AG04450 (cell line): ENCODE measurements at regions of chr18 and their contacts with region 1.

Region 1: GRCh38 chr18:57881818-57882413 is 78.8 kb upstream of the ATP8B1 start:
- DNase-seq: peak; percentile 72
- H3K4me3 ChIP-seq: no peak overlapping the region
- H3K27ac ChIP-seq: no peak overlapping the region
- H3K27me3 ChIP-seq: no peaks in the 10 kb centered on the region
- CTCF ChIP-seq: peak; percentile 98

Region 2: DNA sequence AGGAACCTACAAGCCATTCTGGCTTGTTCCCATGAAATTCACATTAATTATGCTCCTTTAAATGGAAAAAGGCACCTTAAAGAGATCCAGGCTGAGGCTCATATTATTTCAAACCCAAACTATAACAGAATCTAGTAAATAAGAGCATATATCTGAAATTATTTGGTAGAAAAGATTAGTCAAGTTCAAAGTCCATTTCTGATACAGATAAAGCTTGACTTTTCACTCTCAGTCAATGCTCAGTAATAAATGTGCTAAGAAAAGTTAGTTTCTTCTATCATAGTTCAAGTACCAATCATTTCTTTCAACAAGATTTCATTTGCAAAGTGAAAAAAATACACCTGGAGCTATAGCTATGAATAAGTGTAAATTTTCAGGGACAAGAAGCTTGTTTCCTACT is 198.4 kb before region 1 on chr18:
- CTCF ChIA-PET with region 1: no interaction called
- POLR2A ChIA-PET with region 1: no interaction called
- DNase-seq: no peak
- H3K4me3 ChIP-seq: no peak overlapping the region
- H3K27ac ChIP-seq: no peak overlapping the region
- H3K27me3 ChIP-seq: no peaks in the 10 kb centered on the region
- CTCF ChIP-seq: no peak

Region 3: GRCh38 chr18:57869228-57869627 is 12.7 kb before region 1 on chr18:
- CTCF ChIA-PET with region 1: interaction called, 17 read pairs
- POLR2A ChIA-PET with region 1: no interaction called
- DNase-seq: no peak
- H3K4me3 ChIP-seq: no peak overlapping the region
- H3K27ac ChIP-seq: no peak overlapping the region
- H3K27me3 ChIP-seq: no peaks in the 10 kb centered on the region
- CTCF ChIP-seq: no peak

Region 4: DNA sequence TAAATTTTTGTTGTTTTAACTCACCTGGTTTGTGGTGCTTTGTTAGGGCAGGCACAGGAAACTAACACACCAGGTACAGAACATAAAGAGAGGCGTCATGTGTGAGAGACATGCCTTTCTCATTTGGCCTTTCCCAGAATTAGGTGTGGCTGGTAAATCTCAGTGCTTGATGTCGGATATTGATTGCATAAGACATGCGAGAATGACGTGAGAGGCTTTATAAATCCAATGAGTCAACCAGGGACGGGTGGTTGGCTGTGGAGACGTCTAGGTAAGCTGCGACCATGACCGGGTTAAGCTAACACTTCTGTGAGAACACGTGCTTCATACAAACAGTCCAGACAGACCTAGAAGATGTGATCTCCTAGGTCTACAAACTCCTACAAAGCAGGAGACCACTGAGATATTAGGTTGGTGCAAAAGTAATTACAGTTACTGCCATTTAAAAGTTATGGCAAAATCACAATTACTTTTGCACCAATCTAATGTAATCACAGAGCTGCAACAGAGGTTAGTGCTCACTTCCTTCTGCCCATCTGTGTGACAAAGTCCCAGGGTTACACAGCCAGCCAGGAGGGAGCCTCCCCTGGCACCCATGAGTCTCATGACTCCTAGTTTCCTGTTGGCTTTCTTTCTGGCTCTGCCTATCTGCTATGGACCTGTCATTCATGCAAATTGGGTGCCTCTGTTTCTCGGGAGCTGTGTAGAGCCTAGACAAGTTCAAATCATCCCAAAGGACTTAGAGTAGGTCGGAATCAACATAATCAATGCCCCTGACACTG is 20.1 kb after region 1 on chr18:
- CTCF ChIA-PET with region 1: interaction called, 10 read pairs
- POLR2A ChIA-PET with region 1: no interaction called
- DNase-seq: no peak
- H3K4me3 ChIP-seq: no peak overlapping the region
- H3K27ac ChIP-seq: no peak overlapping the region
- H3K27me3 ChIP-seq: peaks cover 6% of the 10 kb centered on the region
- CTCF ChIP-seq: no peak

Region 5: GRCh38 chr18:57915865-57916582 is 34.1 kb after region 1 on chr18:
- CTCF ChIA-PET with region 1: interaction called, 14 read pairs
- POLR2A ChIA-PET with region 1: no interaction called
- DNase-seq: no peak
- H3K4me3 ChIP-seq: no peak overlapping the region
- H3K27ac ChIP-seq: no peak overlapping the region
- H3K27me3 ChIP-seq: no peaks in the 10 kb centered on the region
- CTCF ChIP-seq: no peak

Region 6: GRCh38 chr18:58043491-58044379 is 161.8 kb after region 1 on chr18 and contains the start of gene NEDD4L:
- CTCF ChIA-PET with region 1: interaction called, 16 read pairs
- POLR2A ChIA-PET with region 1: no interaction called
- DNase-seq: peak; percentile 65
- H3K4me3 ChIP-seq: peak within 1 kb of the TSS; percentile 78
- H3K27ac ChIP-seq: peak within 1 kb of the TSS; percentile 68
- H3K27me3 ChIP-seq: peaks cover 8% of the 10 kb centered on the region
- CTCF ChIP-seq: peak; percentile 86
- polyA plus RNA-seq, gene NEDD4L: 13.5 and 15.0 TPM in 2 replicates

Region 7: GRCh38 chr18:58117786-58118403 is 236.0 kb after region 1 on chr18:
- CTCF ChIA-PET with region 1: interaction called, 60 read pairs
- POLR2A ChIA-PET with region 1: no interaction called
- DNase-seq: peak; percentile 84
- H3K4me3 ChIP-seq: no peak overlapping the region
- H3K27ac ChIP-seq: peak overlapping the region; percentile 61
- H3K27me3 ChIP-seq: peaks cover under 1% of the 10 kb centered on the region
- CTCF ChIP-seq: no peak

Region 8: GRCh38 chr18:58180738-58181353 is 298.9 kb after region 1 on chr18:
- CTCF ChIA-PET with region 1: interaction called, 18 read pairs
- POLR2A ChIA-PET with region 1: no interaction called
- DNase-seq: peak; percentile 16
- H3K4me3 ChIP-seq: no peak overlapping the region
- H3K27ac ChIP-seq: no peak overlapping the region
- H3K27me3 ChIP-seq: no peaks in the 10 kb centered on the region
- CTCF ChIP-seq: peak; percentile 84